ENCODE measurements at regions of chr18 and their contacts with region 1.

Region 1: DNA sequence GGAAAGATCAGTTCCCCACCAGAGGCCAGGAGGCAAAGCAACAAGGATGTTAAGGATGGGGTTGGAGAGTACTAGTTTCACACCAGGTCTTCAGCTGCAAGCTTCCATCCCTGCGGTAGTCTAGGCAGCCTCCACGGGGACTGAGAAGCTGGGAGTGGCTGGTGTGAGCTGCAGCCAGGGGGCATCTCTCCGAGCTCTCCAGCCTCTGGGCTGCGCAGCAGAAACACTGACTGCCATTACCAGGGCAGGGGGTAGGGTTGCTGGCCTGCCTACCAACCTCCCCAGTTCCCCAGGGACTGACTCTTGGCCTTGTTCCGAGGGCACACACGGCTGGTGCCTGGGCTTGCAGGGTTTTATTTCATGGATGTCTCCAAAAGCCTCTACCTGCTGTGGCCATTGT is 15.9 kb downstream of the GATA6 start:
- DNase-seq: no peak
- H3K4me3 Mint-ChIP-seq: peak overlapping the region; percentile 58
- H3K27ac Mint-ChIP-seq: peak overlapping the region; percentile 93
- H3K4me1 Mint-ChIP-seq: peaks cover 72% of the 10 kb centered on the region
- H3K27me3 Mint-ChIP-seq: no peaks in the 10 kb centered on the region
- CTCF ChIP-seq: no peak

Region 2: GRCh38 chr18:22169007-22169864 is 16.0 kb before region 1 on chr18 and contains the start of gene GATA6:
- CTCF ChIA-PET with region 1: interaction called, 21 read pairs
- intact Hi-C with region 1: loop called (anchors 2 kb)
- DNase-seq: peak; percentile 94
- H3K4me3 Mint-ChIP-seq: peak within 1 kb of the TSS; percentile 98
- H3K27ac Mint-ChIP-seq: peak within 1 kb of the TSS; percentile 94
- H3K4me1 Mint-ChIP-seq: peaks cover 8% of the 10 kb centered on the region
- H3K27me3 Mint-ChIP-seq: peaks cover 23% of the 10 kb centered on the region
- CTCF ChIP-seq: no peak
- total RNA-seq, gene GATA6: 54.6 and 58.4 TPM in 2 replicates

Region 3: DNA sequence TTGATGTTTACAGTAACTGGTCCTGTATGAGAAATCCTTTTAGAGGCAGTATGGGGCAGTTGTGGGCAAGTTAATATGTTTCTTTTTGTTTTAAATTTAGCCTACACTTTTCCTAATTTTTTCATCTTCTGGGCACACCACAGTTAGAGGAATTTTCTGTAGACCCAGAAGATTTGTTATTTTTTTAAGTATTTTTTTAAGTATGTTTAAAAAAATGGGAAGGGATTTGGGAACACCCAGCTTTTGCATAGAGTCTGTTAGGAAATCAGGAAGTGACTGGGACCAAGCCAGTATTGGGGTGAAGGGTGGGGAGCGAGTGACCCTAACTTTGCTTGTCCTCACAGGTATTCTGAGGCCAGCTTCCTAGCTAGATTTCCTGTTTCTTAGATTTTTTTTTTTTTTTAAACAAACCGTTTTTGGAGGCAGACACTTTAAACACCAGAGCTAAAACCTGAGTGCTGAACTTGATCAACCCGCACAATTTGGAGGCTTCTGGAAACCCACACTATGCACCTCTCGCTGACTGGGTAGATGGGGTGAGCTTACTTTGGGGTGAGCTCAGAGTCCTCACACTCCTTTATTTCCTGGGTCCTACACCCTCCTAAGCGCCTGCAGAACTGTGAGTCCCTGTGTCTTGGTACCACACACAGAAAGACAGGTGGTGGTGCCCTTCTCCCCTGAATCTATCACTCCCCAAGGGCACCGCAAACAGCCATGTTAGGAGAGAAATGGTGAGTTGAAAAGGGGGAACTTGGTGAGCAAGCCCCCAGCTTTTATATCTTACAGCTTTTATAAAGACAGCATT is 10.7 kb before region 1 on chr18:
- CTCF ChIA-PET with region 1: interaction called, 21 read pairs
- intact Hi-C with region 1: loop called (anchors 2 kb)
- DNase-seq: no peak
- H3K4me3 Mint-ChIP-seq: peak overlapping the region; percentile 98
- H3K27ac Mint-ChIP-seq: peak overlapping the region; percentile 98
- H3K4me1 Mint-ChIP-seq: peaks cover 1% of the 10 kb centered on the region
- H3K27me3 Mint-ChIP-seq: no peaks in the 10 kb centered on the region
- CTCF ChIP-seq: no peak

Region 4: GRCh38 chr18:22432672-22433137 is 247.4 kb after region 1 on chr18:
- CTCF ChIA-PET with region 1: interaction called, 3 read pairs
- intact Hi-C with region 1: loop called (anchors 10 kb)
- DNase-seq: peak; percentile 78
- H3K4me3 Mint-ChIP-seq: peak overlapping the region; percentile 46
- H3K27ac Mint-ChIP-seq: peak overlapping the region; percentile 90
- H3K4me1 Mint-ChIP-seq: peaks cover 81% of the 10 kb centered on the region
- H3K27me3 Mint-ChIP-seq: no peaks in the 10 kb centered on the region
- CTCF ChIP-seq: no peak

Region 5: GRCh38 chr18:22465859-22466457 is 280.7 kb after region 1 on chr18:
- CTCF ChIA-PET with region 1: no interaction called
- intact Hi-C with region 1: loop called (anchors 2 kb)
- DNase-seq: peak; percentile 70
- H3K4me3 Mint-ChIP-seq: peak overlapping the region; percentile 64
- H3K27ac Mint-ChIP-seq: peak overlapping the region; percentile 100
- H3K4me1 Mint-ChIP-seq: peaks cover 70% of the 10 kb centered on the region
- H3K27me3 Mint-ChIP-seq: no peaks in the 10 kb centered on the region
- CTCF ChIP-seq: no peak

Region 6: DNA sequence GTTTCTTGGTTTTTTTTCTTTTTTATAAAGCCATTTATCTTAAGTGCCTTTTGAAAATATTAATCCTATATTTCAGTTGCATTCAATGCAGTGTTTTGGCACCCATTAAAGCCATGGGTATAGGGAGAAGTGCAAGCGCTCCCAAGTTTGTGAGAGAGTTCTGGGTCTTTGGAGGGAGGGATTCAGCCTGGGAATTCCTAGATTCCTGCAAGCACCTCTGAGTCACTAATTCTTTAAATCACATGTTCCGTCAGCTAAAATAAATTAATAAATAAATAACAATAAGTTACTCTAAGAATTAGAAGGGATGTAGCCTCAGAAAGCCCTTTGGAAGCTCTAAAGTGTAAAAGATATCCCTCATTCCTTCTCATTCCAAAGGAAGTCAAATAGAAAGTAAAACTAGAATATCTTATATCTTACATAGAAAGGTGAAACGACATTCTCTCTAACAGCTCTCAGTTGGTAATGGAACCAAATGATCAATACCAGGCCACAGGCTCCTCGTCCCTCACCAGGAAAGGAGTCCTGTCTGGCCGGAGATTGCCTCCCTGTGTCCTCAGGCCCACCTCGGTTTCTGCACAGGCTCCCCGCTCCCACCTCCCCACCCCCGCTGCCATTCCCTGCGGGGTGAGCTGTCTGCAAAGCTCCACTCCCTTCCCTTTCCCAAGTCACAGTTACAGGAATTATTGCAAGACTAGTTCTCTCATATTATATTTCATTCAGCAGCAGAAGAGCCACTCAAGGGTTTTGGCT is 525.5 kb after region 1 on chr18:
- CTCF ChIA-PET with region 1: no interaction called
- intact Hi-C with region 1: loop called (anchors 10 kb)
- DNase-seq: peak; percentile 60
- H3K4me3 Mint-ChIP-seq: peak overlapping the region; percentile 74
- H3K27ac Mint-ChIP-seq: peak overlapping the region; percentile 70
- H3K4me1 Mint-ChIP-seq: peaks cover 43% of the 10 kb centered on the region
- H3K27me3 Mint-ChIP-seq: no peaks in the 10 kb centered on the region
- CTCF ChIP-seq: no peak

Measured in Calu3 (cell line).